ENCODE measurements at regions of chr3 and their contacts with region 1.

Region 1: GRCh38 chr3:124559881-124560574 is 170.2 kb upstream of the UMPS start:
- DNase-seq: peak; percentile 83 to 85
- ATAC-seq: peak; percentile 82 to 89
- H3K4me3 ChIP-seq: no peak overlapping the region
- H3K27ac ChIP-seq: peak overlapping the region; percentile 55 to 75; a peak in 5 of 6 replicates
- H3K4me1 ChIP-seq: peaks cover 29% of the 10 kb centered on the region
- CTCF ChIP-seq: peak; percentile 87
- EP300 ChIP-seq: no peak
- POLR2A ChIP-seq: no peak
- RAD21 ChIP-seq: peak; percentile 84 to 92

Region 2: GRCh38 chr3:124014366-124014942 is 545.6 kb before region 1 on chr3:
- CTCF ChIA-PET with region 1: interaction called, 10 read pairs
- POLR2A ChIA-PET with region 1: no interaction called
- DNase-seq: no peak
- ATAC-seq: no peak
- H3K4me3 ChIP-seq: no peak overlapping the region
- H3K27ac ChIP-seq: no peak overlapping the region
- H3K4me1 ChIP-seq: no peaks in the 10 kb centered on the region
- CTCF ChIP-seq: no peak
- EP300 ChIP-seq: no peak
- POLR2A ChIP-seq: no peak
- RAD21 ChIP-seq: no peak

Region 3: GRCh38 chr3:124467980-124468902 is 91.8 kb before region 1 on chr3:
- CTCF ChIA-PET with region 1: interaction called, 36 read pairs
- POLR2A ChIA-PET with region 1: no interaction called
- DNase-seq: peak; percentile 44 to 65
- ATAC-seq: peak; percentile 90 to 98
- H3K4me3 ChIP-seq: no peak overlapping the region
- H3K27ac ChIP-seq: no peak overlapping the region
- H3K4me1 ChIP-seq: no peaks in the 10 kb centered on the region
- CTCF ChIP-seq: peak; percentile 93
- EP300 ChIP-seq: no peak
- POLR2A ChIP-seq: no peak
- RAD21 ChIP-seq: peak; percentile 95 to 98

Region 4: GRCh38 chr3:124576565-124577493 is 16.8 kb after region 1 on chr3:
- CTCF ChIA-PET with region 1: interaction called, 78 read pairs
- POLR2A ChIA-PET with region 1: no interaction called
- DNase-seq: no peak
- ATAC-seq: peak in 1 of 2 experiments; percentile 68; a peak in 3 of 6 replicates
- H3K4me3 ChIP-seq: no peak overlapping the region
- H3K27ac ChIP-seq: no peak overlapping the region
- H3K4me1 ChIP-seq: no peaks in the 10 kb centered on the region
- CTCF ChIP-seq: no peak
- EP300 ChIP-seq: no peak
- POLR2A ChIP-seq: no peak
- RAD21 ChIP-seq: no peak

Region 5: DNA sequence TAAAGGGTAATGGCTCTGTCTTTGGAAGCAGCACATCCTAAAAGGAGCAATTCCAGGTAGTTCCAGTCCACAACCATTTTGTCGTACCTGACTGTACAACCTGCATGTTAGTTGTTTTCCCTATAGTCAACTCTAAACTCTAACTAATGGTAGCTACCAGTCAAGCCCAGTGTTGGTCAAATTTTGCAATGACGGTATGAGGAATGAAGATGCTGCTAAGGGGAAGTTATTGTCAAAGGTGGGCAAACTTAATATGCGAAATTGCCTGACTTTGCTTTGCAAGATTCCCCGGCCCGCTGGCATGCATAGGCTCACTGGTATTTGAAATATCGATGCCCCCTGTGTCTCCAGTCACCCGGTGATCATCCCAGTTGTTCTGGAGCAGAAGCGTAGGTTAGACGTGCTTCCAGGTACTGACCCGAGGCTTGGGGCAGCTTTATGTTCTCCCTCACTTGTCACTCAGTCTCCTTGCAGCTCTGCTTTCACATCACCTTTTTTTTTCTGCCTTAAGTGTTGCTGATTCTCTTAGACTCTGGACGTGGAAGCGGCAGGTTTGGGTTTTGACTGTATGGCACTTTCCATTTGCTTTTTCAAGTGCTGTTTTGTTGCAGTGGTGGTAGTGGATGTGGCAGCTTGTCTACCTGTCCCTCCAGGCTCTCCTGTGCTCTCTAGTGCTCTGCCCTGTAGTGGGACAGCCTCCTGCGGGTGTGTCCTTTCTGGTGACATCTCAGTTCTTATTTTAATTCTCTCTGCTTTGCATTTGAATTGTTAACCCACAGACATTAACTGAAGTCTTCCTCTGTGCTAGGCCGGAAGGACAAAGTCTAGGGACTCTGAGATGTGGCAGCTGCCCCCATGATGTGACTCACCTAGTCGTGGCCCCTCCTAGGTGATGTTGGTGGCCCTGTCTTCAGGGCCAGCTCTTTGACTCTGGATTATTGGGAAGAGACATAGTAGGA is 74.5 kb after region 1 on chr3:
- CTCF ChIA-PET with region 1: interaction called, 11 read pairs
- POLR2A ChIA-PET with region 1: no interaction called
- DNase-seq: peak in 1 of 2 experiments; percentile 10
- ATAC-seq: peak in 1 of 2 experiments; percentile 33; a peak in 2 of 6 replicates
- H3K4me3 ChIP-seq: no peak overlapping the region; the same call in 2 of the 3 replicates
- H3K27ac ChIP-seq: peak overlapping the region; percentile 24 to 55; a peak in 4 of 6 replicates
- H3K4me1 ChIP-seq: peaks cover 26% of the 10 kb centered on the region
- CTCF ChIP-seq: no peak
- EP300 ChIP-seq: no peak
- POLR2A ChIP-seq: no peak
- RAD21 ChIP-seq: no peak

Measured in A549 (cell line).